B cell (primary cell): ENCODE measurements at regions of chr7 and their contacts with region 1.

Region 1: DNA sequence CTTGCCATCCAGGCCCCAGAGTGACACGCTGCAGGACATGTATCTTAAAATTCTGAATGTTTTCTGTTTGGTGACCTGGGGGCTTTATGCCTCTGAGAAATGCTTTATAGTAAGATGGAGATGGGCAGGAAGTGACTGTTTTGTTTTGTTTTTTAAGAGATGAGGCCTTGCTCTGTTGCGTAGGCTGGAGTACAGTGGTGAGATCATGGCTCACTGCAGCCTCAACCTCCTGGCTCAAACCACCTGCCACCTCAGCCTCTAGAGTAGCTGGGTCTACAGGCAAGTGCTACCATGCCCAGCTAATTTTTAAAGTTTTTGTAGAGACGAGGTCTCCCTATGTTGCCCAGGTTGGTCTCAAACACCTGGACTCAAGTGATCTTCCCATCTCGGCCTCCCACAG is 20.6 kb downstream of the ZNF777 start:
- DNase-seq: no peak
- ATAC-seq: no peak
- H3K4me3 ChIP-seq: no peak overlapping the region
- H3K4me3 Mint-ChIP-seq: no peak overlapping the region
- H3K27ac ChIP-seq: no peak overlapping the region
- H3K27ac Mint-ChIP-seq: no peak overlapping the region
- H3K4me1 ChIP-seq: no peaks in the 10 kb centered on the region
- H3K4me1 Mint-ChIP-seq: no peaks in the 10 kb centered on the region
- H3K27me3 ChIP-seq: no peaks in the 10 kb centered on the region
- H3K27me3 Mint-ChIP-seq: no peaks in the 10 kb centered on the region
- CTCF ChIP-seq: no peak

Region 2: DNA sequence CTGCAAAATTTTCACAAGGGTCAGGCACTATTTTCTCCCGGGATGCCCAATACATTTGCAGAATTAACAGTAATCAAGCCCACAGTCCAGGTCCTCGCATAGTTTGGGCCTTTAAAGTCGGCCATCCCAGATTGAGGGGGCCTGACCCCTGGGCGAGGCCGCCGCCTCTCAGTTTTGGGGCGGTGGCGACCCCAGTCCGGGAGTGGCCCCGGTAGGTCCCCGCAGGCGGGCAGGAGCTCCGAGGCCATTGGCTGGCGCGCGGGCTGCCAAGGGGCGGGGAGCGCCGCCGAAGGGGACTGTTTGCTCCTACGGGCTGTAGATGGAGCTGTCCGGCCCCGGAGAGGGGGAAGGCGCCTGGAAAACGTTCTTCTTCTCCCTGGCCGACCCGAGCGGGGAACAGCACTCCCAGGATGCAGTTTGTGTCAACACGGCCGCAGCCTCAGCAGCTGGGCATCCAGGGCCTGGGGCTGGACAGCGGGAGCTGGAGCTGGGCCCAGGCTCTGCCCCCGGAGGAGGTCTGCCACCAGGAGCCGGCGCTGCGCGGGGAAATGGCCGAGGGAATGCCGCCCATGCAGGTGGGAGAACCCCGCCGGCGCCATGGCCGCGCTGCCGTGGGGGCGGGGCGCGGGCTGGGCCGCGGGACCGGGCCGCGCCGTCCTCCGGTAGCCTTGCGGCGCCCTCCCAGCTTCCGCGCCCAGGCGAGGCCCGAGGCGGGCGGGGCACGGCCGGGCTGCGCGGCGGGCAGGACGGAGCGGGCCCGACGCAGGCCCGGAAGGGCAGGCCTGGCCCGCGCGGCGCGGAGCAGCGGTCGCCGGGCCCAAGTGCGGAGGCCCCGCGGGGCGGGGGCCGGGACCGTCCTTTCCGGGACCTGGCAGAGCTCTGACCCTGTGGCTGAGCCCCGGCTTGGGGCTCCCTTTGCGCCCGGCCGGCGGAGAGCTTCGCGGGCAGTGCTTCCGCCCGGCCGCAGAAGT is 244.8 kb before region 1 on chr7 and contains the start of gene ZNF282:
- CTCF ChIA-PET with region 1: no interaction called
- POLR2A ChIA-PET with region 1: interaction called, 21 read pairs
- intact Hi-C with region 1: no loop called
- DNase-seq: peak; percentile 81
- ATAC-seq: peak; percentile 84
- H3K4me3 ChIP-seq: peak within 1 kb of the TSS; percentile 60 to 92 (median 83)
- H3K4me3 Mint-ChIP-seq: peak within 1 kb of the TSS; percentile 89
- H3K27ac ChIP-seq: peak within 1 kb of the TSS; percentile 47 to 76
- H3K27ac Mint-ChIP-seq: peak within 1 kb of the TSS; percentile 81
- H3K4me1 ChIP-seq: peaks cover 14 to 18% of the 10 kb centered on the region in 2 donors
- H3K4me1 Mint-ChIP-seq: peaks cover 38% of the 10 kb centered on the region
- H3K27me3 ChIP-seq: no peaks in the 10 kb centered on the region
- H3K27me3 Mint-ChIP-seq: no peaks in the 10 kb centered on the region
- CTCF ChIP-seq: peak; percentile 58
- total RNA-seq, gene ZNF282: 25.7 and 26.8 TPM in 2 replicates

Region 3: DNA sequence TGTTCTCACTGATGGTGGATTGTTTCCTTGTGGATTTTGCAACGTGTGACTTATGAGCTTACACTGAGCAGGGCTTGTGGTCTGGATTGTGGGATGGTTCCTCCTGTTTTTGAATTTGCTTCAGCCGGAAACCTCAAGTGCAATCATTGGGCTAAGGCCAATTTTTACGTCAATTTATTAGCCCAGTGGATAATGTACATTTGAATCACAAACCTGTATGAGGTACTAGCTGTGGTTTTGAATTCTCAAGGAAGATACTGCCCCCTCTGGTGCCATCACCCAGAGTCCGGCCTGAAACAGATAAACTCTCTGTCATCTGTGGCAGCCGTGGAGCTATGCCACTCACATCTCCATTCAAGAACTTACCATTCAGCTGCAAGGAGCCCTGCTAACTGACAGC is 28.0 kb after region 1 on chr7:
- CTCF ChIA-PET with region 1: no interaction called
- POLR2A ChIA-PET with region 1: no interaction called
- intact Hi-C with region 1: no loop called
- DNase-seq: no peak
- ATAC-seq: no peak
- H3K4me3 ChIP-seq: no peak overlapping the region
- H3K4me3 Mint-ChIP-seq: no peak overlapping the region
- H3K27ac ChIP-seq: no peak overlapping the region
- H3K27ac Mint-ChIP-seq: no peak overlapping the region
- H3K4me1 ChIP-seq: no peaks in the 10 kb centered on the region
- H3K4me1 Mint-ChIP-seq: no peaks in the 10 kb centered on the region
- H3K27me3 ChIP-seq: peaks cover 0 to 11% (median 5%) of the 10 kb centered on the region in 4 experiments
- H3K27me3 Mint-ChIP-seq: peaks cover 18% of the 10 kb centered on the region
- CTCF ChIP-seq: no peak